A549 (cell line): ENCODE measurements at regions of chr1 and their contacts with region 1.

Region 1: GRCh38 chr1:19485362-19486187 is at the start of gene CAPZB:
- DNase-seq: peak; percentile 81 to 83
- ATAC-seq: peak; percentile 86 to 92
- H3K4me3 ChIP-seq: peak within 1 kb of the TSS; percentile 94
- H3K27ac ChIP-seq: peak within 1 kb of the TSS; percentile 98 to 100
- H3K4me1 ChIP-seq: peaks cover 34% of the 10 kb centered on the region
- CTCF ChIP-seq: no peak
- EP300 ChIP-seq: no peak
- POLR2A ChIP-seq: peak; percentile 77
- RAD21 ChIP-seq: no peak
- polyA plus RNA-seq, gene CAPZB: 129 and 133 TPM in 2 replicates

Region 2: GRCh38 chr1:19496625-19496874 is 11.0 kb after region 1 on chr1:
- CTCF ChIA-PET with region 1: interaction called, 11 read pairs
- POLR2A ChIA-PET with region 1: interaction called, 7 read pairs
- DNase-seq: no peak
- ATAC-seq: no peak
- H3K4me3 ChIP-seq: no peak overlapping the region
- H3K27ac ChIP-seq: no peak overlapping the region
- H3K4me1 ChIP-seq: no peaks in the 10 kb centered on the region
- CTCF ChIP-seq: no peak
- EP300 ChIP-seq: no peak
- POLR2A ChIP-seq: no peak
- RAD21 ChIP-seq: no peak

Region 3: GRCh38 chr1:19582302-19582701 is 96.7 kb after region 1 on chr1:
- CTCF ChIA-PET with region 1: interaction called, 13 read pairs
- POLR2A ChIA-PET with region 1: no interaction called
- DNase-seq: peak; percentile 25 to 54
- ATAC-seq: peak in 1 of 2 experiments; percentile 84; a peak in 4 of 6 replicates
- H3K4me3 ChIP-seq: no peak overlapping the region
- H3K27ac ChIP-seq: no peak overlapping the region
- H3K4me1 ChIP-seq: no peaks in the 10 kb centered on the region
- CTCF ChIP-seq: peak; percentile 48
- EP300 ChIP-seq: no peak
- POLR2A ChIP-seq: no peak
- RAD21 ChIP-seq: peak; percentile 61 to 65

Region 4: GRCh38 chr1:19596714-19597495 is 111.3 kb after region 1 on chr1:
- CTCF ChIA-PET with region 1: no interaction called
- POLR2A ChIA-PET with region 1: no interaction called
- DNase-seq: peak; percentile 90 to 96
- ATAC-seq: peak; percentile 90 to 96
- H3K4me3 ChIP-seq: peak overlapping the region; percentile 97
- H3K27ac ChIP-seq: peak overlapping the region; percentile 98
- H3K4me1 ChIP-seq: peaks cover 13% of the 10 kb centered on the region
- CTCF ChIP-seq: no peak
- EP300 ChIP-seq: no peak
- POLR2A ChIP-seq: peak; percentile 57
- RAD21 ChIP-seq: no peak